ENCODE measurements at regions of chr1 and their contacts with region 1.

Region 1: GRCh38 chr1:27416387-27417111 is 24.1 kb downstream of the GPR3 start:
- DNase-seq: peak; percentile 72
- ATAC-seq: peak; percentile 77
- H3K4me3 Mint-ChIP-seq: no peak overlapping the region
- H3K27ac Mint-ChIP-seq: peak overlapping the region; percentile 1
- H3K4me1 Mint-ChIP-seq: peaks cover 24% of the 10 kb centered on the region
- H3K27me3 Mint-ChIP-seq: no peaks in the 10 kb centered on the region

Region 2: DNA sequence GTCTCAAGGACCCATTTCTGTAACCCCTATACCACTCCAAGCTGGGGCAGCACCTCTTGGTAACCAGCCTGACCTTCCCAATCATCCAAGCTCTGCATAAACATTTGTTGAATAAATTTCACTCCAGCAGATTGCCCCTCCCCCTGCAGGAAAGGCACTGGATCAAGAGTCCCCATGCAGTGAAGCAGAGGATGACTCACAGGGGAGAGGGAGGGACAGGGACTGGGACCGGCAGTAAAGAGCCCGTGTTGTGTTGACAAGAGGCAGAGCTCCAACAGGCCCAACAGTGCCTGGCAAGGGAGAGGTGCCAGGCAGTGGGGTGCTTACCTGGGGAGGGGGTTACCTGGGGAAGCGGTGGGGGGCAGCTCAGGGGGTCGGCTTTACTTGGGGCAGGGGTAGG is 293.9 kb before region 1 on chr1:
- CTCF ChIA-PET with region 1: no interaction called
- POLR2A ChIA-PET with region 1: no interaction called
- DNase-seq: no peak
- ATAC-seq: no peak
- H3K4me3 Mint-ChIP-seq: no peak overlapping the region
- H3K27ac Mint-ChIP-seq: no peak overlapping the region
- H3K4me1 Mint-ChIP-seq: peaks cover 8% of the 10 kb centered on the region
- H3K27me3 Mint-ChIP-seq: no peaks in the 10 kb centered on the region

Region 3: DNA sequence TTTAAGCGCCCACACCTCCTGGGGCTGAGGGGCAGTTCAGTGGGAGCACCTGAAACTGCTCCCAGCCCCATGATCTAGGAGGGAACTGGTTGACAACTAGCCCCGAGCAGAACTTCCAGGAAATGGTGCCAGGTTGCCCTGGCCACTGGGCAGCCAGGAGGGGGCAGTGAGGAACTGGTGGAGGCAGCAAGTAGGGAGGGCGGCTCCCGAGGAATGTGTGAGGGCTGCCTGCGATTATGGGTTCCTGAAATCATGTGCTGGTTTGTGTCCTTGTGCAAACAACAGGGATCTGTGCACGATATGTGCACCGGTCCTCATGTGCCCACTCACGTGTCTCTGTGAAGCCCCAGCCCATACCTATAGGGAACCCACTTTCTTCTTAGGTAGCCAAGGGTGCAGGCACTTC is 14.2 kb before region 1 on chr1:
- CTCF ChIA-PET with region 1: interaction called, 32 read pairs
- POLR2A ChIA-PET with region 1: no interaction called
- DNase-seq: no peak
- ATAC-seq: no peak
- H3K4me3 Mint-ChIP-seq: no peak overlapping the region
- H3K27ac Mint-ChIP-seq: no peak overlapping the region
- H3K4me1 Mint-ChIP-seq: peaks cover 23% of the 10 kb centered on the region
- H3K27me3 Mint-ChIP-seq: no peaks in the 10 kb centered on the region

Region 4: GRCh38 chr1:27436204-27437159 is 19.9 kb after region 1 on chr1:
- CTCF ChIA-PET with region 1: interaction called, 20 read pairs
- POLR2A ChIA-PET with region 1: interaction called, 3 read pairs
- DNase-seq: peak; percentile 35
- ATAC-seq: peak; percentile 85
- H3K4me3 Mint-ChIP-seq: peak overlapping the region; percentile 49
- H3K27ac Mint-ChIP-seq: peak overlapping the region; percentile 62
- H3K4me1 Mint-ChIP-seq: peaks cover 55% of the 10 kb centered on the region
- H3K27me3 Mint-ChIP-seq: no peaks in the 10 kb centered on the region

Region 5: DNA sequence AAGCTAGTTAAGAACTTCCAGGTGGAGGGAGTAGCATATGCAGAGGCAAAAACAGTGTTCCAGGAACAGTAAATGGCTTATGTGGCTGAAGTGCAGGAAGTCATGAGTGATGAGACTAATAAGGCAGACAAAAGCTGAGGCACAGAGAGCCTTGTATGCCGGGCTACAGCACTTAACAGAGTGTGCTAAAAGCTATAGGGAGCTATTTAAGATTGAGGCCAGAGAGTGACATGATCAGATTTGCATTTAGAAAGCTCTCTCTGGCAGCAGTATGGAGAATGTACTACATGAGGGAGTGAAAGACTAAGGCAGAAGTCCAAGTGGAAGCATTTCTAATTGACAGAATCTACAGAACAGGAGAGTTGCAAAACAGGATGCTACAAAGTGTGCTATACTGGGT is 34.8 kb after region 1 on chr1:
- CTCF ChIA-PET with region 1: interaction called, 11 read pairs
- POLR2A ChIA-PET with region 1: no interaction called
- DNase-seq: no peak
- ATAC-seq: no peak
- H3K4me3 Mint-ChIP-seq: no peak overlapping the region
- H3K27ac Mint-ChIP-seq: peak overlapping the region; percentile 69
- H3K4me1 Mint-ChIP-seq: peaks cover 49% of the 10 kb centered on the region
- H3K27me3 Mint-ChIP-seq: no peaks in the 10 kb centered on the region

Region 6: GRCh38 chr1:27525296-27526272 is 109.0 kb after region 1 on chr1:
- CTCF ChIA-PET with region 1: interaction called, 19 read pairs
- POLR2A ChIA-PET with region 1: interaction called, 4 read pairs
- DNase-seq: peak; percentile 85
- ATAC-seq: peak; percentile 56
- H3K4me3 Mint-ChIP-seq: peak overlapping the region; percentile 66
- H3K27ac Mint-ChIP-seq: peak overlapping the region; percentile 65
- H3K4me1 Mint-ChIP-seq: peaks cover 67% of the 10 kb centered on the region
- H3K27me3 Mint-ChIP-seq: no peaks in the 10 kb centered on the region

Measured in activated CD8-positive, alpha-beta T cell treated with anti-CD3 and anti-CD28 coated beads, Interleukin-2, amount 10 ng/mL, durations not matched to agents 7 days and 5 days (primary cell).